SK-N-SH (cell line): ENCODE measurements at regions of chr7 and their contacts with region 1.

Region 1: DNA sequence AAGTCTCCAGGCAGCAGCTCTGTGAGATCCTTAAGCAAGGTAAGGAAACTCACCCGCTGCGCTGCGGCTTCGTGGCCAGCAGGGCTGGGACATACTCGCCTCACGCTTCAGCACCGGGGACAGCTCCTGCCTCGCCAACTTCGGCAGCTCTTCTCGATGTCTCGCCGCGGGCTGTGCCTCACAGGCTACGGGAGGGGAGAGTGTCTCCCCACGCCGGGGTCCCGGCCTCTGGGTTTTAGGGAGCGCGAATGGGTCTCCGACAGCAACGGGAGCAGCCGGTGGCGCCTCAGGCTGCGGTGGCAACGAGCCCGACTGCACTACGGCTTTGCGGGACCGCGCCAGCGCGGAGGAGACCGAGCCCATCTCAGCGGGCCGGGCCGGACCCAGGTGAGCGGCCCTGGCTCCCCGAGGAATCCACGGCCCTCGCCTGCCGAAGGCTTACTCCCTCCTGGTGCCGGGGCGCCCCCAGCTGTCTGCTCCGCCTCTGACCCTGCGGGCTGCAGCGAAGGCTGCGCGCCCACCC is 62.4 kb downstream of the LSM5 start:
- DNase-seq: peak; percentile 70
- H3K4me3 ChIP-seq: peak overlapping the region in 1 of 2 experiments; percentile 40; a peak in 2 of 4 replicates
- H3K27ac ChIP-seq: no peak overlapping the region
- H3K4me1 ChIP-seq: no peaks in the 10 kb centered on the region; a peak in 1 of 4 replicates
- H3K27me3 ChIP-seq: peaks cover 20% of the 10 kb centered on the region; the same call in 1 of the 2 replicates
- CTCF ChIP-seq: peak; percentile 53
- EP300 ChIP-seq: no peak
- RAD21 ChIP-seq: no peak

Region 2: GRCh38 chr7:32255036-32255435 is 172.8 kb before region 1 on chr7:
- CTCF ChIA-PET with region 1: no interaction called
- POLR2A ChIA-PET with region 1: no interaction called
- DNase-seq: no peak
- H3K4me3 ChIP-seq: no peak overlapping the region
- H3K27ac ChIP-seq: no peak overlapping the region
- H3K4me1 ChIP-seq: no peaks in the 10 kb centered on the region
- H3K27me3 ChIP-seq: peaks cover 20% of the 10 kb centered on the region
- CTCF ChIP-seq: no peak
- EP300 ChIP-seq: no peak
- RAD21 ChIP-seq: no peak

Region 3: GRCh38 chr7:32381024-32381601 is 46.7 kb before region 1 on chr7:
- CTCF ChIA-PET with region 1: no interaction called
- POLR2A ChIA-PET with region 1: no interaction called
- DNase-seq: no peak
- H3K4me3 ChIP-seq: no peak overlapping the region
- H3K27ac ChIP-seq: no peak overlapping the region
- H3K4me1 ChIP-seq: peaks cover 0 to 5% of the 10 kb centered on the region in 2 experiments; a peak in 1 of 4 replicates
- H3K27me3 ChIP-seq: peaks cover 19% of the 10 kb centered on the region; the same call in 1 of the 2 replicates
- CTCF ChIP-seq: peak; percentile 19; the same call in 1 of the 2 replicates
- EP300 ChIP-seq: no peak
- RAD21 ChIP-seq: no peak

Region 4: GRCh38 chr7:32415936-32416335 is 11.9 kb before region 1 on chr7:
- CTCF ChIA-PET with region 1: interaction called, 12 read pairs
- POLR2A ChIA-PET with region 1: no interaction called
- DNase-seq: no peak
- H3K4me3 ChIP-seq: no peak overlapping the region
- H3K27ac ChIP-seq: no peak overlapping the region
- H3K4me1 ChIP-seq: no peaks in the 10 kb centered on the region
- H3K27me3 ChIP-seq: peaks cover 20% of the 10 kb centered on the region; the same call in 1 of the 2 replicates
- CTCF ChIP-seq: no peak
- EP300 ChIP-seq: no peak
- RAD21 ChIP-seq: no peak

Region 5: GRCh38 chr7:32639122-32639521 is 211.3 kb after region 1 on chr7:
- CTCF ChIA-PET with region 1: no interaction called
- POLR2A ChIA-PET with region 1: no interaction called
- DNase-seq: no peak
- H3K4me3 ChIP-seq: no peak overlapping the region
- H3K27ac ChIP-seq: no peak overlapping the region
- H3K4me1 ChIP-seq: no peaks in the 10 kb centered on the region
- H3K27me3 ChIP-seq: no peaks in the 10 kb centered on the region
- CTCF ChIP-seq: no peak
- EP300 ChIP-seq: no peak
- RAD21 ChIP-seq: no peak